Left ventricle myocardium inferior (tissue), 1 donor: ENCODE measurements at regions of chr16 and their contacts with region 1.

Region 1: GRCh38 chr16:21075252-21075651 is 75.4 kb downstream of the DNAH3 start:
- DNase-seq: no peak
- H3K4me3 ChIP-seq: no peak overlapping the region
- H3K27ac ChIP-seq: no peak overlapping the region
- H3K4me1 ChIP-seq: peaks cover 16% of the 10 kb centered on the region
- H3K27me3 ChIP-seq: no peaks in the 10 kb centered on the region
- CTCF ChIP-seq: no peak

Region 2: DNA sequence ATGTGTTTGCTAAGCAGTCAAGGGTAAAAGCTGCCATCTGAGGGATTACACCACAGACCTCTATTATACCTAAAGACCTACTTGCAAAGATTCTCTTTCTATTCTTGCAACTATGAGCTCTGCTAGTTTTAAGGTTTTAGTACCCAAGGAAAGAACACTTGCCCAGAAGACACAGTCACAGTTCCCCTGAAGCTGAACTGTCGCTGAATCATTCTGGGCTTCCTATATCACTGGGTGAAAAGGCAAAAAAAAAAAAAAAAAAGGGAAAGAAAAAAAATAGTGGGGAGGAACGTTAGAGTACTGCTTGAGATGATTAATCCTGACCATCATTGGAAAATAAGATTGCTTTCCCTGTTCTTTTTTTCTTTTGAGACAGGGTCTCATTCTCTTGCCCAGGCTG is 136.8 kb before region 1 on chr16:
- intact Hi-C with region 1: loop called (anchors 10 kb)
- DNase-seq: no peak
- H3K4me3 ChIP-seq: no peak overlapping the region
- H3K27ac ChIP-seq: no peak overlapping the region
- H3K4me1 ChIP-seq: no peaks in the 10 kb centered on the region
- H3K27me3 ChIP-seq: no peaks in the 10 kb centered on the region
- CTCF ChIP-seq: no peak